Endothelial cell of umbilical vein (primary cell): ENCODE measurements at regions of chr3 and their contacts with region 1.

Region 1: GRCh38 chr3:160583451-160583850 is 18.1 kb upstream of the KPNA4 start:
- DNase-seq: no peak
- H3K4me3 ChIP-seq: no peak overlapping the region
- H3K27ac ChIP-seq: no peak overlapping the region
- H3K4me1 ChIP-seq: no peaks in the 10 kb centered on the region
- H3K27me3 ChIP-seq: peaks cover 6 to 8% of the 10 kb centered on the region in 2 experiments
- CTCF ChIP-seq: no peak
- POLR2A ChIP-seq: no peak

Region 2: GRCh38 chr3:160653512-160653911 is 70.1 kb after region 1 on chr3:
- CTCF ChIA-PET with region 1: no interaction called
- POLR2A ChIA-PET with region 1: no interaction called
- dilution Hi-C with region 1: no loop called
- intact Hi-C with region 1: no loop called
- DNase-seq: no peak
- H3K4me3 ChIP-seq: no peak overlapping the region
- H3K27ac ChIP-seq: no peak overlapping the region
- H3K4me1 ChIP-seq: no peaks in the 10 kb centered on the region
- H3K27me3 ChIP-seq: no peaks in the 10 kb centered on the region
- CTCF ChIP-seq: no peak
- POLR2A ChIP-seq: no peak

Region 3: DNA sequence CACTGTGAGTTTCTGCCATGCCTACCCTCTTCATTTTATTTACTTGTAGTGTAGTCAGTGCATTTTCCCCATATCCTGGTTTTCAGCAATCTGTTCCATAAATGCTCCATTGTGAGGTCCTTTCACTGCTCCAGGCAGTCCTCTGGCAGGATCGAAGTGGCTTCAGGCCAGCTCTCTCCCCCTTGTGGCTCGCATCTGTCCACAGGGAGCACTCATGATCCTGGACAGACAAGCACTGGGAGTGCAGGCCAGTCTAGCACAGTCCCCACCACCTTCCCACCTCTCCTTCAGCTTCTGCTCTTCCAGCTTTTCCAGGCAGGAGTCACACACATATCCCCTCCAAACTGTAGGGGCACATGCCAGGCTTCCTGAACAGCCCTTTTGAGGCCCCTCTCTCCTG is 346.1 kb after region 1 on chr3:
- CTCF ChIA-PET with region 1: no interaction called
- POLR2A ChIA-PET with region 1: no interaction called
- dilution Hi-C with region 1: no loop called
- intact Hi-C with region 1: loop called (anchors 5 kb)
- DNase-seq: peak; percentile 19
- H3K4me3 ChIP-seq: no peak overlapping the region
- H3K27ac ChIP-seq: no peak overlapping the region
- H3K4me1 ChIP-seq: no peaks in the 10 kb centered on the region
- H3K27me3 ChIP-seq: no peaks in the 10 kb centered on the region
- CTCF ChIP-seq: peak in 1 of 2 donors; percentile 17
- POLR2A ChIP-seq: no peak